Stomach (tissue), 19 donors: ENCODE measurements at regions of chr15 and their contacts with region 1.

Region 1: DNA sequence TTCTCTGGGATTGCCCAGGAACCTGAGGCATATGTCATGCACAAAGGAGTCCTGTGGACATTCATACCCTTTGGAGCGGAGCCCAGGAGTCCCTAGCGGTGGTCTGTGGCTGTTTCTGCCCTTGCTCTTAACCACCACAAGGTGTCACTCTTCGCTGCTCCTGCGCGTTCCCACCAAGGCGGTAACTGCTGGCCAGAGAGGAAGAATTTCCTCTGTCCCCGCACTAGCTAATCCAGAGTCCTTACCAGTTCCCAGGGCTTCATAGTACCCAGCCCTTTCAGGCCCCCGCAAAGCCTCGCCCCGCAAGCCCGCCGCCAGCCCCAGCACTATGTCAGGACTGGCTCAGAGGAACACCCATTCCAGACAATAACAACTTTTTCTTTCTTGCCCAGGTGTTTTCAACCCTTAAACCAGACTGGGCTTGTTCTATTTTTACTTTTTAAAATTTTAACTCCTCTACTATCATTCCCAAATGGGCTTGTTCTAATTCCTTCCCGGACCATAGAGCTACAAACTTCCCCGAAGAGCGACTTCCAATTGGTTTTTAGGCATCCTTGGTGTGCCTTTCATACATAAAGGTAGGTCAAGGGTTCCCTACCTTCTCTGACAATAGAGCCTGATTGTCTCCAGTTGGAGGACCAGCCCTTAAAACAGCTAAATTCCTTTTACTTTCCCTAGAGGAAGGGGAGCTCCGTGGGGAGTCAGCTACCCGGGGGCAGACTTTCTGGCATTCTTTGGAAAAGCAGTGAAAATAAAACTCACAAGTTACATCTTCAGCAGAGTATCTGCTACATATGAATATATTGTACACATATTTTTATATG is 31.8 kb upstream of the ZNF774 start:
- DNase-seq: peak; percentile 80 to 96
- H3K4me3 ChIP-seq: no peak overlapping the region
- H3K27ac ChIP-seq: peak overlapping the region in 1 of 5 donors; percentile 39
- H3K4me1 ChIP-seq: peaks cover 8 to 31% (median 20%) of the 10 kb centered on the region in 4 donors
- H3K27me3 ChIP-seq: no peaks in the 10 kb centered on the region
- CTCF ChIP-seq: peak in 5 of 7 experiments; percentile 94 to 99 (median 96)
- EP300 ChIP-seq: no peak
- POLR2A ChIP-seq: no peak

Region 2: GRCh38 chr15:90478981-90479481 is 158.8 kb after region 1 on chr15:
- intact Hi-C with region 1: loop called (anchors 10 kb)
- DNase-seq: peak; percentile 20 to 48
- H3K4me3 ChIP-seq: no peak overlapping the region
- H3K27ac ChIP-seq: peak overlapping the region in 4 of 5 donors; percentile 26 to 72 (median 60)
- H3K4me1 ChIP-seq: peaks cover 0 to 28% (median 9%) of the 10 kb centered on the region in 4 donors
- H3K27me3 ChIP-seq: no peaks in the 10 kb centered on the region
- CTCF ChIP-seq: no peak
- EP300 ChIP-seq: no peak
- POLR2A ChIP-seq: no peak